ENCODE measurements at regions of chr18 and their contacts with region 1.

Region 1: GRCh38 chr18:24118750-24119577 is 19.9 kb upstream of the CABYR start:
- DNase-seq: peak; percentile 71
- ATAC-seq: peak; percentile 70 to 75

Region 2: GRCh38 chr18:23629444-23629946 is 489.5 kb before region 1 on chr18:
- intact Hi-C with region 1: loop called in 1 of 2 experiments (anchors 10 kb)
- DNase-seq: no peak
- ATAC-seq: no peak

Region 3: DNA sequence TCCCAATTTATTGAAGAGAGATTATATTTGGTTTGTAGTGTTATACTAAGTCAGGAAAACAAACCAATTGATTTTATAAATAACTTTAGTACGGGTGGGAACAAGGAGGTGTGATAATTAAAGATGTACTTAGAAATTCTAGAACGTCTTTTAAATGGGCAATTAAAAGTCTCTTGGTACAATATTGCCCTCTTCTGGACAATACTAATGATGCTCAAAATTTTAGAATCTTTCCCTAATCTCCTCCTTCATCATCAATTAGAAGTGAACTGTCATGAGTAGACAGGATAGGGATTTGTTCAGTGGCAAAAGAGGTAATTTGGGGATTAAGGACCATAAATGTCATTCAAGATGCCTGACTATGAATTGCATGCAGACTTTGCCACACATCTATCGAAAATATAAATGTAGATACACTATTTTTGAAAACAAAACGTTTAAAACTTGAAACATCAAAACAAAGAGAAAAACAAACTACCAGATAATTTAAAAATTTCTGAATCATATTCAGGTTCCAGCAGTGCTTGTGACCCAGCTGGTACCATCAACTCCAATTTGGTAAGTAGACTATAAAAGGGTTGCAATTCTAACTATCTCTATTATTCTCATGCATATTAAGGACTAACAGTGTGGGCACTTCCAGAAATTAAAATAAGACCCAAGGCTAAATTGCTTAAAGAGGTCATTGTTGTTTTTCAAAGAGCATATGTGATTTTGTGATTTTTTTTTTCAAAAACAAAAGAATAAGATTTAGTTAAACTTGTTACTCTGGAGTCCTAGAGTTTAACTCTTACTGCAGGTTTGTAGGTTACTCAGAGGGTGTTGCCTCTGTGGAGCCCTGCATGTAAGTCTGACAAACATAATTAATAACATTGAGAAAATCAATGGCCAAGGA is 306.2 kb before region 1 on chr18:
- intact Hi-C with region 1: loop called in 1 of 2 experiments (anchors 10 kb)
- DNase-seq: no peak
- ATAC-seq: no peak

Region 4: DNA sequence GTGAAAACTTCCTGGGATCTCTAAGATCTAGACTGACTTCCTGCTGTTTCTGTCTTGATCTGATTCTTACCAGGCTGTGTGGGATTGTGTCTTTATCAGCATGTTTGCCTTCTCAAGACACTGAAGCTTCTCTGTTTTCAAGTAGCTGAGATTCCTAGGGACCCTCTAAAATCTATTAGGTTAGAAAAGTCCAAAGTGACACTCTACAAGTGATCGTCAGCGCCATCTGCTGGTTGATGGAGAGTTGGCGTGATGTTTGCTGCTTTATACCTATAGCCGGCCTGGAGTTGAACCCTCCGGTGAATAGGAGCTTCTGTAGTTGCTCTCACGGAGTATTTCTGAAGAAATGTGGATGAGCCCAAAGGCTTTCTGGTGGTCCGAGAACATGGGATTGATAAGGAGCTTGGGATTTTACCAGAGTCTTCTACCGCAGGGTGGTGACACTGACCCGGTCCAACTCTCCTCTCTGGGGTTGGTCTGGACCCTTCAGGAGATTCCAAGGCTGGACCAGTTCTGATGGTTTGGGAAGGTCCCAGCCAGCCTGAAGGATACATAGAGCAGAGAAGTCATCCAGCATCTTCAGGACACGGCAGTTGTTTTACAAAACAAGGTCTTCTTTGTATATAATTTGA is 200.4 kb before region 1 on chr18:
- intact Hi-C with region 1: loop called (anchors 10 kb)
- DNase-seq: peak; percentile 79
- ATAC-seq: peak; percentile 71 to 79

Region 5: GRCh38 chr18:23924813-23925212 is 194.2 kb before region 1 on chr18:
- intact Hi-C with region 1: loop called in 1 of 2 experiments (anchors 10 kb)
- DNase-seq: no peak
- ATAC-seq: no peak

Region 6: GRCh38 chr18:23967321-23968089 is 151.5 kb before region 1 on chr18:
- intact Hi-C with region 1: loop called in 1 of 2 experiments (anchors 10 kb)
- DNase-seq: no peak
- ATAC-seq: peak in 1 of 2 donors; percentile 43

Region 7: DNA sequence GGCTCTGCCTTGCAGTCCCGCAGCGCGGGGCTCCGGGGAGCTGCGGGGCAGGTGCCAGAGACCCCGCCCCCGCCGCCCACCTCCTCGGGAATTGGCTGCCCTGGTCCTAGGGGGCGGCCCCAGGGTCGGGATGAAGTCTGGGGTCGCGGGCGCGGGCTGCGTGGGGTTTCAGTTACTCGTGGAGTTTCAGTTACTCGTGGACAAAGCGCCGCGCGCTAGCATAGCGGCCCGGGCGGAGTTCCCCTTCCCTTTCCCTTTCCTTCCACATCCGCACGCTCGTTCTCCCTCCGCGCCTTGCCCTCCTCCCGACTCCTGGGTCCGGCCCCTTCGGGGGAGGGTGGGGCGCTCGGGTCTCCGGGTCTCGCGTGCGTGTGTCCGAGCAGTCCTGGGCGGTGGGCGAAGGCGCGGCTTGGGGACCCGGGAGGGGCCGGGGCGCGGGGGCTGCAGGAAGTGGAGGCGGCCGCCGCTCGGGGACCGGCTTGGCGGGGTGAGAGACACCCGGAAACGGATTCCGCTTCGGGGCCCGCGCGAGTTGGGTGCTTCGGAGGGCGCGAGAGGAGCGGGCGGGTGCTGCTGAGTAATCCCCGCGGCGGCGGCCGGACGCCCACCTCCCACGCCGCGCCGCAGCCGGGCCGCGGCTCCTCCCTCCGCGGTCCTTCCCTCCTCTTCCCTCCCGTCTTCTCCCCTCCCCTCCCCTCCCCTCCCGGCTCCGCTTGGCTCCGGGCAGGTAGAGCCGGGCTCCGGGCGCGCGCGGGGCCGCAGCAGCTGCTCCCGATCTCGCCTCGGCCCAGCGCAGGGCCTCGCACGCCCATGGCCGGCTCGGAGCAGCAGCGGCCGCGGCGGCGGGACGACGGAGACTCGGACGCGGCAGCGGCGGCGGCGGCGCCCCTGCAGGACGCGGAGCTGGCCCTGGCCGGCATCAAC is 104.6 kb before region 1 on chr18 and contains the start of gene TTC39C:
- intact Hi-C with region 1: loop called in 1 of 2 experiments (anchors 10 kb)
- DNase-seq: peak; percentile 81
- ATAC-seq: peak; percentile 84 to 94
- total RNA-seq, gene TTC39C: 7.6 to 8.9 TPM

Region 8: DNA sequence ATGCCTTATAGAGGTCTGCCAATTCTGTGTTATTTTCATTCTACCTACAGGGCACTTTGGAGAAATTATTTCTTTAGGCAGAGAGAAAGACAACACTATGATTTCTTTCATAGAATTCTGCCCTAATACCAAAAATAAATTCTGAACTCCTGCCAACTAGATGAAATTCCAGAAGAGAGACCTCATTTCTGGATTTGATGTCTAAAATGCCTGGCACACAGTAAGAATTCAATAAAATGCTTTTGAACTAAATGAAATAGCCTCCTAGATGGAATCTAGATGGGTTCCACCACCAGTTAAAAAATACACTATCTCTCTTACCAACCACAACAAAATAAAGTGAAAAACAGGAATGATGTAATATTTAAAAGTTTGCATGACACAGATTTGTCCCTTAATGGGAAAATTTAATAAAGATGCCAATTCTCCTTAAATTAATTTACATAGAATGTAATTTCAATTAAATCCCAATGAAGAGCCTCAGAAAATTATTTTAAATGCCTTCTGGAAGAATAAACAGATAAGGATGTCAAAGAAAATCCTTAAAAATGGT is 203.7 kb after region 1 on chr18:
- intact Hi-C with region 1: no loop called
- DNase-seq: no peak
- ATAC-seq: no peak

Measured in left cardiac atrium (tissue), 4 donors.